Astrocyte of the spinal cord (primary cell): ENCODE measurements at regions of chr1 and their contacts with region 1.

Region 1: DNA sequence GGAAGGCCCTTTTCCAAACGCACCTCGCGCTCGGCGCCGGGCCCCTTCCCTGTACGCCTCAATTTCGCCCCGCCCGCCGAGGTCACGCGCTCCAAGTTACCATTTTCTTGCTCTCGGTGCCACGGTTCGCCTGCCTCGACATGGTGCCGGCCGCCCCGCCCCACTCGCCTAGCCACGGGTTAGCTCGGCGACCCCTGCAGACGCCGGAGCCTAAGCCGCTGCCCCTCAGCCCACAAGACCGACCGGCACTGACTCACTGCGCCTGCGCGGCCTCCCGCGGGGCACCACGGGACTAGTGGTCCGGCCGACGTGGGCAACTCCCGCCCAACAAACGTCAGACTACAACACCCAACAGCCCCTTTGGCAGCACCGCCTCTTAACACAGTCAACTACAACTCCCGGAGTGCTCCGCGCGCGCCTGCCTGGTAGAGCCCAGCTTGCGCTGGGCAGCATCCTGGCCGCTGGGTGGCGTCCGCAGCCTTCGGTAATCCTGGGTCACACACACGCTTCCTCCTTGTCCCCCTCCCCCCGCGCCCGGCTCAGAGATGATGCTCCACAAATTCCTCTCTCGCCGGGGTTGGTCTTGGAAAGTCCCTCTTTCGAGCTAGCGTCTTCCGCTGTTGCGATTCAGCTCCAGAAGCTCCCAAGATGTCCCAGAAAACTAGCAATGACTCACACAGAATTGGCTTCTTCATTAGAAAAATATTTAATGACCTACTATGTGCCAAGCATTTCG is at the start of gene TRAPPC3:
- DNase-seq: peak; percentile 100
- H3K4me3 ChIP-seq: peak within 1 kb of the TSS; percentile 82
- CTCF ChIP-seq: peak; percentile 96

Region 2: DNA sequence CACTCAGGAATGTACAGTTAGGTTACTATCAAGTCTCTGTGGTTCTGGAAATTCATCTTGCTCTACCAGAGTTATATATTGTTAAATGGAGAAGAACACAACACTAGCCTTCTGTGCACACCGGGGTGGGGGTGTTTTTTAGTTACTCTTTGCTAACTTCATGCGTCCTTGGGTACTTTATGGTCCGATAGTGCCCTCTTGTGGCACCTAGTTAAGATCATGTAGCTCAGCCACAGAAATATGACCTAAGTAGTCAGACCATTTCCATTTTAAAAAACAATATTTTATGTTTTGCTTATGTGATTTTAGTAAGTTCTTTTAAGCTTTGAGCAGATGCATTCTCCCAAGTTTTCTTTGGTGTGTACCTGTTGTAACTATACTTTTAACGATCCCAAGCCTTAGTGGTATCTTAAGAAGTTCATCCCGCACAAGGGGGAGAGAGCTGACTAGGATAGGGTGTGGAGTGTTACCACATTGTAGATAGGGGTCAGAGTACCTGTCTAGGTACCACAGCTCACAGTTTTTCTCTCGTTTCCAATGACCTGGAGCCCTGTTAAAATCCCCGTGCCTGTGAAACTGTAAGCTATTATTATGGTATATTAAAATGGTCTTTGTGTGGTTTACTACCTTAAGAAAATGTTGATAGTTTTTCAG is 136.2 kb after region 1 on chr1:
- in situ Hi-C with region 1: loop called (anchors 25 kb)
- DNase-seq: peak; percentile 88
- H3K4me3 ChIP-seq: no peak overlapping the region
- CTCF ChIP-seq: peak; percentile 66

Region 3: GRCh38 chr1:36420836-36421664 is 271.6 kb after region 1 on chr1:
- in situ Hi-C with region 1: loop called (anchors 25 kb)
- DNase-seq: peak; percentile 82
- H3K4me3 ChIP-seq: no peak overlapping the region
- CTCF ChIP-seq: peak; percentile 96